Dendritic cell treated with granulocyte-macrophage colony-stimulating factor and Interleukin-4, amounts not matched to agents 40 ng/mL and 50 ng/mL, for 4 days (primary cell): ENCODE measurements at regions of chr13 and their contacts with region 1.

Region 1: GRCh38 chr13:77952727-77953126 is 34.1 kb upstream of the EDNRB start:
- H3K4me3 Mint-ChIP-seq: no peak overlapping the region
- H3K27ac Mint-ChIP-seq: no peak overlapping the region
- H3K4me1 Mint-ChIP-seq: no peaks in the 10 kb centered on the region
- H3K27me3 Mint-ChIP-seq: no peaks in the 10 kb centered on the region

Region 2: DNA sequence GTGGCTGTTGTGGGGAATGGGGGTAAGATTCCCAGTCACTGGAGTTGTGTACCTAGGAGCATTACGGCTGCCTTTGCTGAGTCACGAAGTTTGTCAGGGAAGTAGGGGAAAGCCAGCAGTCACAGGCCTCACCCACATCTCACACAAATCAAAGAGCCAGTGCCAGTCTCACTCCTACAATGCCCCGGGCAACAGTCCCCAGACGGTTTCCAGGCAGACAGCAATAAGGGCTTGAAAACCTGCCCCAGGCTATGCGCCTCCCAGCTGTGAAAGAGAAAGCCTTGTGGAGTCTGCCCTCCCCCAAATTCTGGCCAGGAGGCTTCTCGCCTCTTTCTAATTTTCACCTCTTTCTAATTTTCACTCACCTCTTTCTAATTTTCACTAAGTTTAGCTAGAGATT is 108.2 kb after region 1 on chr13:
- intact Hi-C with region 1: loop called (anchors 10 kb)
- H3K4me3 Mint-ChIP-seq: no peak overlapping the region
- H3K27ac Mint-ChIP-seq: no peak overlapping the region
- H3K4me1 Mint-ChIP-seq: no peaks in the 10 kb centered on the region
- H3K27me3 Mint-ChIP-seq: no peaks in the 10 kb centered on the region